ENCODE measurements at regions of chr17 and their contacts with region 1.

Region 1: GRCh38 chr17:3845621-3846441 is at the start of gene NCBP3:
- DNase-seq: peak; percentile 33
- H3K4me3 ChIP-seq: peak within 1 kb of the TSS; percentile 98
- H3K27me3 ChIP-seq: peaks cover 2% of the 10 kb centered on the region; the same call in 1 of the 2 replicates
- CTCF ChIP-seq: peak; percentile 87
- polyA plus RNA-seq, gene NCBP3: 9.7 and 19.3 TPM in 2 replicates

Region 2: DNA sequence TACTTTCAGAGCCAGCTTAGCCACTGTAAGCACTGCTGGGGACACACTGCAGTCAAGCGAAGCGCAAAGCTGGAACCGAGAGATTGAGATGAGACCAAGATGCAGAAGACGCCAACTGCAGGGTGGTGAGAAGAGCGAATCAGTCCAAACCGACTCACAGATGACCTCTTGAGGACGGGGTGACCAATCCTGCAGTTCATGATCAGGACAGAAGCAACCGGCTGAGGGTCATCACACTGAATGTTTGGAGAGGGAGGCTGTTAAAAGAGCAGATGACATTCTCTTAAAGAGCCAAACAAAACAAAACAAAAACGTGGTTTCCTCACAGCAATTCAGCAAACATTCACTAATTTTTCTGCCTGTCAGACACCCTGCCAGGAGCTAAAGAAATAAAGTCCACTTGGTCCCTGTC is 113.6 kb before region 1 on chr17:
- CTCF ChIA-PET with region 1: interaction called, 57 read pairs
- POLR2A ChIA-PET with region 1: no interaction called
- DNase-seq: no peak
- H3K4me3 ChIP-seq: no peak overlapping the region
- H3K27me3 ChIP-seq: no peaks in the 10 kb centered on the region
- CTCF ChIP-seq: peak; percentile 23; the same call in 1 of the 2 replicates

Region 3: GRCh38 chr17:3827124-3827773 is 18.6 kb before region 1 on chr17:
- CTCF ChIA-PET with region 1: interaction called, 13 read pairs
- POLR2A ChIA-PET with region 1: interaction called, 3 read pairs
- DNase-seq: no peak
- H3K4me3 ChIP-seq: no peak overlapping the region
- H3K27me3 ChIP-seq: no peaks in the 10 kb centered on the region
- CTCF ChIP-seq: peak; percentile 70

Region 4: GRCh38 chr17:3835410-3836229 is 10.2 kb before region 1 on chr17:
- CTCF ChIA-PET with region 1: interaction called, 15 read pairs
- POLR2A ChIA-PET with region 1: no interaction called
- DNase-seq: no peak
- H3K4me3 ChIP-seq: no peak overlapping the region
- H3K27me3 ChIP-seq: no peaks in the 10 kb centered on the region
- CTCF ChIP-seq: no peak

Region 5: GRCh38 chr17:3857121-3858100 is 11.6 kb after region 1 on chr17:
- CTCF ChIA-PET with region 1: interaction called, 14 read pairs
- POLR2A ChIA-PET with region 1: no interaction called
- DNase-seq: no peak
- H3K4me3 ChIP-seq: no peak overlapping the region
- H3K27me3 ChIP-seq: no peaks in the 10 kb centered on the region
- CTCF ChIP-seq: no peak

Region 6: DNA sequence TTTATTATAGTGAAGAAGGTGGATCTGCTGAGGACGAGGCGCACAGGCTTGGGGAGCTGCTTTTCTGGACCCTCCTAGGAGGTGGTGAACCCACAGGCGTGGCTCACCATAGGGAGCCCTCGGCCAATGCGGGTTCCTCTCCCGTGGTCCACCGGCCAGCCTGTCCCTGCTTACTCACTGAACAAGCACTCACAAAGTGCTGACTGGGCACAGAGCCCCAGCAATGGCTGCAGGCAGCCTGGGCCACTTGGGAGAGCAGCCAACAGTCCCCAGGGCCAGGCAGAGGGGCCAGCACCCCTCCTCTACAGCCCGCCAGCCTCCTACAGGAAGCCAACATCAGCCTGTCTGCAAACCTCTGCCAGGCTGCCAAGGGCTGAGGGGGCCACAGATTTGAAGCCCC is 19.3 kb after region 1 on chr17:
- CTCF ChIA-PET with region 1: interaction called, 15 read pairs
- POLR2A ChIA-PET with region 1: no interaction called
- DNase-seq: no peak
- H3K4me3 ChIP-seq: no peak overlapping the region
- H3K27me3 ChIP-seq: no peaks in the 10 kb centered on the region
- CTCF ChIP-seq: no peak

Region 7: DNA sequence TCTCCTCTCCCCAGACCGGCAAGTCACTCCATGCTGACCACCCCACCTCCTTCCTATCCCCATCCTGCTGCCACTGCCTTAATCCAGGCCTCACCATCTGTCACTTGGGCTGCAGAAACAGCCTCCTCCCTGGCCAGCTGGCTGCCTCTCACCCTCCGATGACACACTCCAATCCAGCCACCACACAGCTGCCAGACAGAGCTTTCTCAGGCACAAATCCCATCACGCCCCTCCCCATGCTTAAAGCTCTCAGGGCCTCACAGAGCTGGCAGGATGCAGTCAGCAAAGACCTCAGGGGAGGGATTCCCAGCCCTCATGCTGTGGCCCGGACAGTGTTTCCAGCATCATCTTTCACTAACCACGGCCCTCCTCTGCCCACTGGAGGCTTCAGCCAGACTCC is 33.4 kb after region 1 on chr17:
- CTCF ChIA-PET with region 1: interaction called, 10 read pairs
- POLR2A ChIA-PET with region 1: no interaction called
- DNase-seq: peak; percentile 33
- H3K4me3 ChIP-seq: no peak overlapping the region
- H3K27me3 ChIP-seq: no peaks in the 10 kb centered on the region
- CTCF ChIP-seq: no peak

Measured in BJ (cell line).